Activated B cell treated with CpG ODN at 0.5 μM for 24 hours (primary cell): ENCODE measurements at regions of chr18 and their contacts with region 1.

Region 1: GRCh38 chr18:51029694-51030536 is at the start of gene SMAD4:
- DNase-seq: peak; percentile 98
- ATAC-seq: peak; percentile 85
- H3K4me3 Mint-ChIP-seq: peak within 1 kb of the TSS; percentile 96
- H3K27ac Mint-ChIP-seq: peak within 1 kb of the TSS; percentile 96
- H3K4me1 Mint-ChIP-seq: peaks cover 57% of the 10 kb centered on the region
- H3K27me3 Mint-ChIP-seq: no peaks in the 10 kb centered on the region
- CTCF ChIP-seq: no peak
- total RNA-seq, gene SMAD4: 83.8 and 94.9 TPM in 2 replicates

Region 2: DNA sequence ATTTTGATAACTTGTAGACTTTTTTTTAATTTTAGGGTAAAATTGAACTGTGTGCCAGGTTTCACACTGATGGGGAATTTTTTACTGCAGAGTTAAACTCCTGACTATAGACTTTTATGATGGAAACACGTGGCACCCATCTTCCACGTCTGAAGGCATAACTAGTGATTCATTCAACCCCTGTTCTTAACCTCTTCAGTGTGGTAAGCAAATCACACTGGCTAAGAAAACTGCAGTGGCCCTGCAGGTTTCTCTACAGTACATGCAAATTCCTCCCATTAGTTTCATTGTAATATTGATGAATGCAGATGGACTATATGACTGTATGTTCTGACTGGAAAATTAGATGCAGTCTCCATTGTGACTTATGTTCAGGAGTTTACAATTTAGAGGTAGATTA is 47.3 kb after region 1 on chr18:
- CTCF ChIA-PET with region 1: no interaction called
- POLR2A ChIA-PET with region 1: no interaction called
- intact Hi-C with region 1: loop called (anchors 5 kb)
- DNase-seq: no peak
- ATAC-seq: peak; percentile 33
- H3K4me3 Mint-ChIP-seq: no peak overlapping the region
- H3K27ac Mint-ChIP-seq: no peak overlapping the region
- H3K4me1 Mint-ChIP-seq: peaks cover 34% of the 10 kb centered on the region
- H3K27me3 Mint-ChIP-seq: no peaks in the 10 kb centered on the region
- CTCF ChIP-seq: no peak